Vagina (tissue), 2 donors: ENCODE measurements at regions of chr14 and their contacts with region 1.

Region 1: DNA sequence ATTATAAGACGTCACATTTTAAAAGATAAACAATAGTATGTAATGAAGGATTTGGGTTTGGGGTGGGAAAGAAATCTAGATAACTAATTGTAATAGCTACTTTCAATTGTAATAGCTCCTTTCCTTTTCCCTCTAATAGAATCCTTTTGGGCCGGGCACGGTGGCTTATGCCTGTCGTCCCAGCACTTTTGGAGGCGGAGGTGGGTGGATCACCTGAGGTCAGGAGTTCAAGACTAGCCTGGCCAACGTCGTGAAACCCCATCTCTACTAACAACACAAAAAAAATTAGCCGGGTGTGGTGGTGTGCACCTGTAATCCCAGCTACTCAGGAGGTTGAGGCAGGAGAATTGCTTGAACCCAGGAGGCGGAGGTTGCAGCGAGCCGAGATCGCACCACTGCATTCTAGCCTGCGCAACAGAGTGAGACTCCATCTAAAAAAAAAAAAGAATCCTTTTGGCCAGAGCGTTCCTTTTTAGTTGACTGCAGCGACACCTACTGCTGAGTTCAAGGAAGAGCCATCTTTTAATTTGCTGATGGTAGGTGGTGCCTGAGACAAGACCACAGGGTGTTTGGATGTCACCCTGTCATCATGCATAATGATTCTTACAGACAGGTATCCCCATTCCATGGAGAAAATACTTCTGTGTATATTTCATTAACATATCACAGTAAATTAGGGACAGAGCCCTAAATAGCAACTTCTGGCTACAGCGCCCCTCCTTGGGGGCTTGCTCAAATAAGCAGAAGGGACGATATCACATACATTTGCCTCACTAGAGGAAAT is 79.5 kb downstream of the ARMH4 start:
- DNase-seq: no peak
- H3K4me3 ChIP-seq: peak overlapping the region; percentile 21 to 25
- H3K27ac ChIP-seq: no peak overlapping the region
- H3K4me1 ChIP-seq: no peaks in the 10 kb centered on the region
- H3K27me3 ChIP-seq: no peaks in the 10 kb centered on the region
- CTCF ChIP-seq: peak; percentile 68 to 78 (median 69)
- POLR2A ChIP-seq: no peak

Region 2: DNA sequence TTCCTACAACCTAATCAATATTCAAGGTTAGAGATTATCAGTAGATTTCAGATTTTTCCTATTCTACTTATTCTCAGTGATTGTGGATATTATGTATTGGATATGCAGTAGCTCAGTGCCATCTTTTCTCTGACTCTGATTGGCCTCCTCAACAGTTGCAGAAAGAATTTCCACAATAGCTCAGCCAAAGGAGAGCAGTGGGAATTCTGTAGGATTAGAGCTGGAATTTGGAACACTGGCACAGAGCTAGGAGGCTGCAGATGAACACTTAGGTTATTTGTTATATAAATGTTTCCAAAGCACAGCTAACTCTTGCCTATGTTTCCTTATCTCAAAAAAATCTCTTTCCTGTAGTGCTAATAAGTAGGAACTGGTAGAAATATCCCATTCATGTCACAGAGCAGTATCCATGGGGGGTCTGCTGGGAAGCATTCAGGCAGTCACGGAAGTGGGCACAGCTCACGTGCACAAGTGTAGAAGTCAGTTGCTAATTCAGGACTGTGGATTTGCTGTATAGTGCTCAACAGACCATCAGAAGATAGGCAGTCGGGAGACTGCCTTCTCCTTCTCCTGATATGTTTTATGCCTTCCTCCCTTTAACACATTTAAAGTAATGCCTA is 1609.1 kb before region 1 on chr14:
- intact Hi-C with region 1: no loop called
- DNase-seq: no peak
- H3K4me3 ChIP-seq: no peak overlapping the region
- H3K27ac ChIP-seq: no peak overlapping the region
- H3K4me1 ChIP-seq: no peaks in the 10 kb centered on the region
- H3K27me3 ChIP-seq: no peaks in the 10 kb centered on the region
- CTCF ChIP-seq: no peak
- POLR2A ChIP-seq: no peak

Region 3: DNA sequence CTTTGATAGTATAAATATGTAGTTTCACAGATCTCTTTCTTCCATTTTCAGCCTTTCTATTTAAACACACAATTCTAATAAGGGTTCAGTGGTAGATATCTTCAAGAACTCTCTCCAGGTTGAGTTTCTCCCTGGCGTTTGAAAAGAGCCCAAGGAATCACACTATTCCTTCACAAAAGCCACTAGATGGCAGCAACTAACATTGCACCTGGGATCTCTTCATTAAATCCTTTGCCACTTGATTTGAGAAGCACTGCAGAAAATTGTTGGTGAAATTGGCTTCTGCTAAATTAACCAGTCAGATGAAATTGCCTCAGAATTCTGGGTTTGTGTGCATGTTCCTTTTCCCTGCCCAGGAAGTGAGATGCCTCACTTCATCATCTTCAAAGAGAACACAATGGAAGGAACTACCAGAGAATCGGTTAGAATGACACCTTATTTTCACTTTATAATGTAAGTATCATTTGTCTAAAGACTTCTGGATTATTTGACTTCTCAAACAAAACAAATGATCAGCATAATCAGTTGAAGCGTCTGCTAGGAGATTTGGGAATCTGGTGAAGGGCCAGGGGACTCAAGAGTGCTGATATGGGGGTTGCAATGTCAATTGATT is 585.6 kb before region 1 on chr14:
- intact Hi-C with region 1: loop called (anchors 10 kb)
- DNase-seq: no peak
- H3K4me3 ChIP-seq: no peak overlapping the region
- H3K27ac ChIP-seq: no peak overlapping the region
- H3K4me1 ChIP-seq: no peaks in the 10 kb centered on the region
- H3K27me3 ChIP-seq: no peaks in the 10 kb centered on the region
- CTCF ChIP-seq: no peak
- POLR2A ChIP-seq: no peak